Mammary epithelial cell (primary cell): ENCODE measurements at regions of chr13 and their contacts with region 1.

Region 1: DNA sequence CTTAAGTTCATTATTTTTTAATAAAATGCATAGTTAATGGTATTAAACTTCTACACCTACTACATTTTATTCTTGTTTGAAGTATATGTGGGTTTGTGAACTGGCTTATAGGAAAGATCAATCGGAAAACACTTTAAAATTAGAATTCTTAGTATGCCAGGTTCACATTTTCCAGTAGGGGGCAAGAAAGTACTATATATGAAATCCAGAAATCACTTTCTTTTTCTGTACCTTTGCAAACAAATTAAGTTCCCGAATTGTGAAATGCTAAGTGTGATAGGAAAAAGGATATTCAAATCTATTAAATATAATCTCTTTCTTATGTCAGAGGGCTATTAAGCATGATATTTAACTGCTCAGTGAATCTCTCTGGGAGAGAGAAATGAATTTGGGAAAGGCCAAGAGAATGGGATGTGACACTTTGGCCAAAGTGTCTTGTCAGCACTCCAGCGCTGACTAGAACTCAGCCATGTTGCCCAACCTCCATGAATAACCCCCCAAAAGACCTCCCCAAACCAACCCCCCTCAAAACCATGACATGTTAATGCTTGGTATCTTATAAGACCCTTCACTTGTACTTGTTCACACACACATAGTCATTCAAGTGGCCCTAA is 122.6 kb upstream of the SLC10A2 start:
- DNase-seq: peak; percentile 23
- H3K4me3 ChIP-seq: no peak overlapping the region
- H3K27ac ChIP-seq: no peak overlapping the region
- H3K4me1 ChIP-seq: no peaks in the 10 kb centered on the region
- H3K27me3 ChIP-seq: no peaks in the 10 kb centered on the region
- CTCF ChIP-seq: peak; percentile 58 to 68

Region 2: GRCh38 chr13:103328899-103329298 is 140.1 kb after region 1 on chr13:
- CTCF ChIA-PET with region 1: no interaction called
- dilution Hi-C with region 1: no loop called
- in situ Hi-C with region 1: no loop called
- intact Hi-C with region 1: loop called (anchors 1 kb)
- DNase-seq: peak; percentile 1
- H3K4me3 ChIP-seq: no peak overlapping the region
- H3K27ac ChIP-seq: no peak overlapping the region
- H3K4me1 ChIP-seq: no peaks in the 10 kb centered on the region
- H3K27me3 ChIP-seq: no peaks in the 10 kb centered on the region
- CTCF ChIP-seq: peak in 1 of 2 donors; percentile 10